Left lung (tissue), 14 donors: ENCODE measurements at regions of chr5 and their contacts with region 1.

Region 1: DNA sequence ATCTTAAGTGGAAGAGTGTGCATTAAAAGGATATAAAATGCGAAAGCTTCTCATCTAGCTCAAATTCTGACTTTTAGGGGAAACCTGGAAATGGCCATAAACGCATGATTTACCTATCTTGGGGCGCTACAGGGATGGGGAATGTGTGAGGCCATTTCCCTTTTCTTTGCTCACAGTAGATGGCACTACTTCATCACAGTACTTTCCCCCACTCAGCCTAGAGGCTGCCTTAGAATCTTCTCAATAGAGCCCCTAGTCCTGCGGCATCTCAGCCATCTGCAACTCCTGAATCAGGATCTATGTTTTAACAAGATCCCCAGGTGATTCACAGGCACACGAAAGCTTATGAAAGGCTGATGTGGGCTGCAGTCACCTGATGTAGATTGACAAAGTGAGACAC is 110.8 kb downstream of the LHFPL2 start:
- DNase-seq: peak in 2 of 4 donors; percentile 47 to 70
- ATAC-seq: peak; percentile 70
- H3K4me3 ChIP-seq: no peak overlapping the region
- H3K27ac ChIP-seq: no peak overlapping the region
- H3K4me1 ChIP-seq: peaks cover 0 to 62% of the 10 kb centered on the region in 2 donors
- H3K27me3 ChIP-seq: no peaks in the 10 kb centered on the region
- CTCF ChIP-seq: peak; percentile 33 to 47

Region 2: GRCh38 chr5:78308703-78309102 is 229.1 kb before region 1 on chr5:
- intact Hi-C with region 1: no loop called
- DNase-seq: no peak
- ATAC-seq: no peak
- H3K4me3 ChIP-seq: no peak overlapping the region
- H3K27ac ChIP-seq: no peak overlapping the region
- H3K4me1 ChIP-seq: no peaks in the 10 kb centered on the region
- H3K27me3 ChIP-seq: peaks cover 0 to 6% of the 10 kb centered on the region in 2 donors
- CTCF ChIP-seq: no peak

Region 3: DNA sequence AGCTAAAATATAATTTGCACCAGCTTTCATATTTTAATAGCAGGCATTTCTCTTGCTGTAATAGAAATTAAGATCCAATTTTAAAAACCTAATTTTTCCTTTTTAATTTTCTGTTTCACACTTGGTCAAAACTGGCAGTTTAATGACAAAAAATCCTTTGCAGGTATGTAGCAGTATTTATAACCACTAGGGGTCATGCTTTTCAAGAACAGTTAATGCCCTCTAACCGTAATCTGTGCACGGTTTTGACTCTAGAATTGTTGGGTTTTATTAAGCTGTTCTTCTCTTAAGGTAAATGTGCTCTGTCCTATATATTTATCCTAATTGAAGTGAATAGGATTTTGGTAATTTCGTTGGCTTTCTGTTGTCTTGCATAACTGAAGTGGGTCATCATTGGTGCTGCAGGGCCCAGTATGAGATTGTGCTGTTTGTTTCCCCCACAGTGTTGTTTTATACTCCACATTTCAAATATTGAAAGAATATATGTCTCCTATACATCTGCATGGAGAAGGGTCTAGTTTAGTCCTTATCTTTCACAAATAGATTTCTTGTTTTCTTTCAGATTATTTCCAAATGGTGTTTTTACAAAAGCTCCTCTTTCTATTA is 70.0 kb before region 1 on chr5:
- intact Hi-C with region 1: loop called in 1 of 2 experiments (anchors 10 kb)
- DNase-seq: peak in 2 of 4 donors; percentile 11 to 38
- ATAC-seq: peak; percentile 83
- H3K4me3 ChIP-seq: no peak overlapping the region
- H3K27ac ChIP-seq: no peak overlapping the region
- H3K4me1 ChIP-seq: peaks cover 0 to 6% of the 10 kb centered on the region in 2 donors
- H3K27me3 ChIP-seq: no peaks in the 10 kb centered on the region
- CTCF ChIP-seq: peak; percentile 77 to 78